ENCODE measurements at regions of chr5 and their contacts with region 1.

Region 1: DNA sequence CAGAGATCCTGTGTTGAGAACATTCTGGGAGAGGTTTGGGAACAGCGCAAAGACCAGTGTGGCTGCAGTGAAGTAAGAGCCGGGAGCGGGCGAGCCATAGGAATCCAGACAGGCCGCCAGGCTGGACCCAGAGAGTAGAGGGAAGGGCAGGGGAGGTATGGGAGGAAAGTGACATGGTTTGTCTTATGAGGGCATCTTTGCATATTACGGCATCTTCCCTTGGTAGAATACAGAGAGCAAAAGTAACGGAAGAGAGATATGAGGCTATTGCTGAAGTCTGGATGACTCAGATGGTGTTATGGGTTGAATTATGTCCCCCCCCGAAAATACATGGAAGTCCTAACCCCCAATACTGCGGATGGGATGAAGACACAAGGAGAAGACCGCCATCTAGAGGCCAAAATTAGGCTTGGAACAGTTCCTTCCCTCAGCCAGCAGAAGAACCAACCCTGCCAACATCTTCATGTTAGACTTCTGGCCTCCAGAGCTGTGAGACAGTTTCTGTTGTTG is 268.2 kb downstream of the MAST4 start:
- DNase-seq: peak; percentile 47
- ATAC-seq: peak; percentile 64
- H3K4me3 ChIP-seq: no peak overlapping the region
- H3K27ac ChIP-seq: no peak overlapping the region
- H3K4me1 ChIP-seq: no peaks in the 10 kb centered on the region
- H3K27me3 ChIP-seq: peaks cover 12% of the 10 kb centered on the region
- CTCF ChIP-seq: peak; percentile 54
- POLR2A ChIP-seq: no peak
- RAD21 ChIP-seq: peak; percentile 57

Region 2: DNA sequence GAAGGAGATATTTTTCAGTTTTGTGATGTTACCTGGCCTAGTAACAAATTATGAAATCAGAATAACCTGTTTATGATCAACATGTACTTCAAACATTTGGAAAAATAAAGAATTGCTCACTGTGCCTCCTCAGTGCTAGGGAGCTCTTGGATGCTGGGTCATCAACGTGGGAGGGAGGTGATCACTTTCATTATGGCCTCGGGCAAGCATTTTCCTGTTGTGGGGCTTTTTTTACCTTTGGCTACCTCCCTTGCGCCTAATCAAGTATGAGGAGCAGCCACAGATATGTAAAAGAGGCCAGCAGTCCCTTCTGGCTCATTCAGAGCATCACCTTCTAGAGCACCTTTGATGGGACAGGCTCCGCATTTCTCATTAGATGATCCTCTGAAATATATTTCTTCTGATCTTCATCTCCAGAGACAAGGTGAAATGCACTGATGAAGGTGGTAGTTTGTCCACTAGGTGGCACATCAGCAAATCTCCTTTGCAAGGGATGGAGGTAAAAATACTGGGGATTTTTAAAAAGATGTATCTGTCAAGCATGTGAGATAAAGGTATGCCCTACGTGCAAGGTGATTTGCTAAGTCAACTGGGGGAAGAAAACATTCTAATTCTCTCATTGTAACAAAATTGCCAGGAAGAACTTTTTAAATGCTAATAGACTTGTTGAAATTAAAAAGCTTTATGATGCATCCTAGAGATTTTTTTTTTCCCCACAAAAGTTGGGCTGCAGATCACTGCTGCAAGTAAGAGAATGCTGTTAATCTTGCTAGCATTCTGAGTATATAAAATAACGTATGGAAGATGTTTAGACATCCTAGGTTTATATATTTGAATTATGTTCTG is 50.0 kb before region 1 on chr5:
- CTCF ChIA-PET with region 1: interaction called, 3 read pairs
- POLR2A ChIA-PET with region 1: no interaction called
- dilution Hi-C with region 1: no loop called
- in situ Hi-C with region 1: no loop called
- intact Hi-C with region 1: loop called (anchors 2 kb)
- DNase-seq: peak; percentile 63
- ATAC-seq: peak; percentile 77
- H3K4me3 ChIP-seq: no peak overlapping the region
- H3K27ac ChIP-seq: no peak overlapping the region
- H3K4me1 ChIP-seq: no peaks in the 10 kb centered on the region
- H3K27me3 ChIP-seq: peaks cover 17% of the 10 kb centered on the region
- CTCF ChIP-seq: peak; percentile 73
- POLR2A ChIP-seq: no peak
- RAD21 ChIP-seq: peak; percentile 68

Measured in IMR-90 (cell line).